ENCODE measurements at regions of chr1 and their contacts with region 1.

Region 1: DNA sequence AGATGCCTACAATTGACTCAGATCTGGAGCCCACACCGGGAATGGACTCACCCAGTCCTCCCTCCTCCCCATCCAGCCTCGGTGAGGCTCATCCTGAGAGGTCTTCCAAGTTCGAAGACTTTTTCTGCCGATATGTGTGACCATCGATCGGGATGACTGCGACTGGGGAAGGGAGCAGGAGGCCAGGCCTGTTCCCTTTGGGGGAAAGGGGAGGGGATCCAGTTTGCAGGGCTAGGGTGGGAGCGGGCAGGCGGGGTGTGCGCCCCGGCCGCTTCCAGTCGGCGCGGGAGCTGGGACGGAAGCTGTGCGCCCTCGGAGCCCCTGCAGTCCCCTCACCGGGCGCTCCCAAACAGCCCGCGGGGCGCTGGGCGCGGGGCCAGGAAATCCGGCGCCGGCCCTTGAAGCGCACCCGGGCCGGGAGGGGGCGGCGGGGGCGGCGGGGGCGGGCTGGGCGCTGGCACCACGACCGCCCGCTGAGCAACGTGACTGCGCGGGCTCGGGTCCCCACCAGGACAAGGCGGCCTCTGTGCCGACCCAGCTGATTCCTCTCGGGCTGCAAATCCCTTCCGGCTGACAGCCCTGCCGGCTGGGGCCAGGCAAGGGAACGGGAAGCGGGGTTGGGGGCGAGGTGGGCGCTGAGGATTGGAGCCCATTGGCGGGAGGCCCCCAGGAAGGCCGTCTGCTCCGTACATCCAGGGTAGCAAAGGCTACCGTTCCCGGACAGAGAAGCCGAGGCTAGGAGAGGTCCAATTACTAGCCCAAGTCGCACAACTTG is 103.9 kb downstream of the EBNA1BP2 start:
- DNase-seq: peak in 1 of 10 donors; percentile 27
- H3K4me3 ChIP-seq: peak overlapping the region; percentile 9 to 69 (median 49)
- H3K27ac ChIP-seq: peak overlapping the region in 46 of 59 donors; percentile 2 to 79 (median 56)
- H3K27me3 ChIP-seq: peaks cover 0 to 3% (median 0%) of the 10 kb centered on the region in 45 donors
- CTCF ChIP-seq: no peak

Region 2: GRCh38 chr1:42096554-42096953 is 971.6 kb before region 1 on chr1:
- intact Hi-C with region 1: no loop called
- DNase-seq: no peak
- H3K4me3 ChIP-seq: no peak overlapping the region
- H3K27ac ChIP-seq: no peak overlapping the region
- H3K27me3 ChIP-seq: peaks cover 0 to 5% (median 0%) of the 10 kb centered on the region in 45 donors
- CTCF ChIP-seq: no peak

Region 3: GRCh38 chr1:42913426-42914091 is 154.6 kb before region 1 on chr1:
- intact Hi-C with region 1: loop called in 1 of 2 experiments (anchors 2 kb)
- DNase-seq: peak in 1 of 10 donors; percentile 29
- H3K4me3 ChIP-seq: no peak overlapping the region
- H3K27ac ChIP-seq: no peak overlapping the region
- H3K27me3 ChIP-seq: no peaks in the 10 kb centered on the region
- CTCF ChIP-seq: peak in 55 of 56 donors; percentile 41 to 84 (median 70)

Region 4: GRCh38 chr1:42958488-42959319 is 109.5 kb before region 1 on chr1 and contains the start of gene SLC2A1:
- intact Hi-C with region 1: loop called (anchors 5 kb)
- DNase-seq: peak; percentile 93 to 98 (median 97)
- H3K4me3 ChIP-seq: peak within 1 kb of the TSS; percentile 61 to 95 (median 87)
- H3K27ac ChIP-seq: peak within 1 kb of the TSS; percentile 61 to 97 (median 91)
- H3K27me3 ChIP-seq: no peaks in the 10 kb centered on the region
- CTCF ChIP-seq: peak in 13 of 56 donors; percentile 5 to 37 (median 13)
- total RNA-seq, gene SLC2A1: 36.8 to 290 (median 105) TPM

Measured in dorsolateral prefrontal cortex (tissue), 120 donors.